ENCODE measurements at regions of chr18 and their contacts with region 1.

Region 1: DNA sequence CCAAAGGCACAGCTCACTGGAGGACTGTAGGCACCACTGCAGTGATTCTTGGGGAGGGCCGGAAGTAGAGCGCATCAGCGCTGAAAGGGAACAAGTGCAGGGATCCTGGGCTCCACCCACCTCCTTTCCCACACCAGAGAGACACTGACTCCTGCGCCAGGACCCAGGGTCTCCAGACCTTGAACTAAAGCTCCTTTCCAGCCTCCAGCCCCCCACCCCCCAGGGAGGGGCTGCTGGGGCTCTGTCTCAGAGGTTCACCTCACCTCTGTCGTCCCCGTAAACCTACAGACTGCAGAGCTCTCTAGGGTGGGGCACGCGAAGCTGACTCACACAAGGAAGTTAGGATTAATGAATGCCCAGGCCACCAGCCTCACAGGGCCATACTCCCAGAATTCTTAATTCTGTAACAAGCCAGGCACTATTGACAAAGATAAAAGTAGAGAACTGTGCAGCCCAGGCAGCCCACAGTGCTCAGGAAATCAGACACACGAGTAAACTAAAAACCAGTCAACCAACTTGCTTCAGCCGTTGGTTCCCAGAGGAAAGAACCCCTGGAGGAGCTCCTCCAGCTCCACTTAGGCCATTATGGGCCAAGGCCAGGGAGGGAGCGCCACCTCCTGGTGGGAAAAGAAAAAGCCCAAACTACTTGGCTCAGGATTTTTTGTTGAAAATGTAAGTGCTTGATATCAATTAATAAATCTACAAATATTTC is 45.1 kb upstream of the ACAA2 start:
- DNase-seq: peak; percentile 66
- H3K4me3 ChIP-seq: no peak overlapping the region
- H3K27ac ChIP-seq: no peak overlapping the region
- H3K4me1 ChIP-seq: peaks cover 11% of the 10 kb centered on the region
- H3K27me3 ChIP-seq: no peaks in the 10 kb centered on the region
- CTCF ChIP-seq: peak; percentile 95

Region 2: DNA sequence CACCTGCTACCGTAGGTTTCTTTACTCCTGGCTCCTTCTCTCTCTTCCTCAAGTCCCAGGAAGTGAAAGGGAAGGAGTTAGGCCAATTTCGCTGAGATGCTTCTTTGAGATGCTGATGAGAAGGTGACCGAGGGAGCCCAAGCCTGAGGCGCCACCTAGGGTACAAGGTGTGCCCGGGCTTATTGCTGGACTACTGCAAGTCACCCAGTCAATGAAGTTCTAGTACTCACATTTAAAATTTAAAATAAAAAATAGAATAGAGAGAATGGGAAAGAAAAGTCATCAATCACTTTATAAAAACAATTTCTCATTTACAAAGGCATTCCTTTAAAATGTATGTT is 90.4 kb before region 1 on chr18:
- CTCF ChIA-PET with region 1: no interaction called
- POLR2A ChIA-PET with region 1: no interaction called
- intact Hi-C with region 1: loop called (anchors 1 kb)
- DNase-seq: peak; percentile 63 to 64
- H3K4me3 ChIP-seq: no peak overlapping the region
- H3K27ac ChIP-seq: no peak overlapping the region
- H3K4me1 ChIP-seq: no peaks in the 10 kb centered on the region
- H3K27me3 ChIP-seq: no peaks in the 10 kb centered on the region
- CTCF ChIP-seq: peak; percentile 89

Region 3: GRCh38 chr18:49944663-49945062 is 86.2 kb after region 1 on chr18:
- CTCF ChIA-PET with region 1: no interaction called
- POLR2A ChIA-PET with region 1: no interaction called
- intact Hi-C with region 1: no loop called
- DNase-seq: no peak
- H3K4me3 ChIP-seq: no peak overlapping the region
- H3K27ac ChIP-seq: no peak overlapping the region
- H3K4me1 ChIP-seq: no peaks in the 10 kb centered on the region
- H3K27me3 ChIP-seq: no peaks in the 10 kb centered on the region
- CTCF ChIP-seq: no peak

Measured in PC-9 (cell line).